Activated CD8-positive, alpha-beta T cell treated with anti-CD3 and anti-CD28 coated beads for 36 hours (primary cell): ENCODE measurements at regions of chr6 and their contacts with region 1.

Region 1: DNA sequence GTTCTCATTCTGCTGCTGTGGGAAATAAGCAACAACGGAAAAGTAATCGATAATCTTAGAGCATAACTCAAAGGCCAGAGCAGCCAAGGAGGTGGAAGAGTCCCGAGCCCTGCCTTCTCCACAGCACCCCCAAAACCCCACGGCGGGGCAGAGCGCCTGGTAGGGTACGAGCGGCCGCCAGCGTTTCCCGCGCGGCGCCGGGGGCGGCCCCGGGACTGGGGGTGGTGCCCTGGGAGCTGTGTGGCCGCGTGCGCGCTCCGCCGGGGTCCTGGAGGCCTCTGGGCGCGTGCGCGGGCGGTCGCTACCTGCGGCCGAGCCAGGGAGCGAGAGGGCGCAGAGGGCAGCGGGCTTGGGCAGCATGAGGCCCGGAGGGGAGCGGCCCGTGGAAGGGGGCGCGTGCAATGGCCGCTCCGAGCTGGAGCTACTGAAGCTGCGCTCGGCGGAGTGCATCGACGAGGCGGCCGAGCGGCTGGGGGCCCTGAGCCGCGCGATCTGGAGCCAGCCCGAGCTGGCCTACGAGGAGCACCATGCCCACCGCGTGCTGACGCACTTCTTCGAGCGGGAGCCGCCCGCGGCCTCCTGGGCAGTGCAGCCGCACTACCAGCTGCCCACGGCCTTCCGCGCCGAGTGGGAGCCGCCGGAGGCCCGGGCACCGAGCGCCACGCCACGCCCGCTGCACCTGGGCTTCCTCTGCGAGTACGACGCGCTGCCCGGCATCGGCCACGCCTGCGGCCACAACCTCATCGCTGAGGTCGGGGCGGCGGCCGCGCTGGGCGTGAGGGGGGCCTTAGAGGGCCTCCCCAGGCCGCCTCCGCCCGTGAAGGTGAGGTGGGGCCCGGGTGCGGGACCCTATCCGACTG is at the start of gene PM20D2:
- DNase-seq: peak; percentile 79
- ATAC-seq: peak; percentile 82
- H3K4me3 Mint-ChIP-seq: peak within 1 kb of the TSS; percentile 88
- H3K27ac Mint-ChIP-seq: peak within 1 kb of the TSS; percentile 98
- H3K4me1 Mint-ChIP-seq: peaks cover 33% of the 10 kb centered on the region
- H3K27me3 Mint-ChIP-seq: peaks cover 2% of the 10 kb centered on the region
- CTCF ChIP-seq: no peak
- total RNA-seq, gene PM20D2: 25.4 to 26.0 TPM

Region 2: DNA sequence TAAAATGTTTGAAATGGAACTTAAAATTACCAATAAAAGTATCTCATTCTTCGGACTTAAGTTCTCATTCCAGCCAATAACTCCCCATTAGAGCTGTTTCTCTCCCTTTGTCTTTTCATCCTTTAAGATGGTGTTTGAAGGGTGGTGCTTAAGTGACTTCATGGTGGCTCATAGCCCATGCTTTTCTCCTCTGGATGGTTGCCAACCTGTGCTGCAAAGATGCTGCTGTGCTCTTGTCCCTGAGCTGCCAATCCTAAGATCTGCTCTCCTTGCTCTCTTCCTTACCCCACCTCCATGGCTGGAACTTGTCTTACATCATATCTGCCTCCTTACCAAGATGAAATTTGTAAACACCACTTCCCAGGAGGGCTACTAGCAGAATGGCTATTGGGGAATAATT is 97.0 kb before region 1 on chr6:
- CTCF ChIA-PET with region 1: no interaction called
- POLR2A ChIA-PET with region 1: no interaction called
- intact Hi-C with region 1: no loop called
- DNase-seq: no peak
- ATAC-seq: no peak
- H3K4me3 Mint-ChIP-seq: no peak overlapping the region
- H3K27ac Mint-ChIP-seq: no peak overlapping the region
- H3K4me1 Mint-ChIP-seq: peaks cover 19% of the 10 kb centered on the region
- H3K27me3 Mint-ChIP-seq: no peaks in the 10 kb centered on the region
- CTCF ChIP-seq: no peak

Region 3: GRCh38 chr6:89161326-89162046 is 15.5 kb after region 1 on chr6:
- CTCF ChIA-PET with region 1: interaction called, 6 read pairs
- POLR2A ChIA-PET with region 1: interaction called, 11 read pairs
- intact Hi-C with region 1: no loop called
- DNase-seq: no peak
- ATAC-seq: no peak
- H3K4me3 Mint-ChIP-seq: no peak overlapping the region
- H3K27ac Mint-ChIP-seq: peak overlapping the region; percentile 3
- H3K4me1 Mint-ChIP-seq: peaks cover under 1% of the 10 kb centered on the region
- H3K27me3 Mint-ChIP-seq: no peaks in the 10 kb centered on the region
- CTCF ChIP-seq: no peak